ENCODE measurements at regions of chr4 and their contacts with region 1.

Region 1: DNA sequence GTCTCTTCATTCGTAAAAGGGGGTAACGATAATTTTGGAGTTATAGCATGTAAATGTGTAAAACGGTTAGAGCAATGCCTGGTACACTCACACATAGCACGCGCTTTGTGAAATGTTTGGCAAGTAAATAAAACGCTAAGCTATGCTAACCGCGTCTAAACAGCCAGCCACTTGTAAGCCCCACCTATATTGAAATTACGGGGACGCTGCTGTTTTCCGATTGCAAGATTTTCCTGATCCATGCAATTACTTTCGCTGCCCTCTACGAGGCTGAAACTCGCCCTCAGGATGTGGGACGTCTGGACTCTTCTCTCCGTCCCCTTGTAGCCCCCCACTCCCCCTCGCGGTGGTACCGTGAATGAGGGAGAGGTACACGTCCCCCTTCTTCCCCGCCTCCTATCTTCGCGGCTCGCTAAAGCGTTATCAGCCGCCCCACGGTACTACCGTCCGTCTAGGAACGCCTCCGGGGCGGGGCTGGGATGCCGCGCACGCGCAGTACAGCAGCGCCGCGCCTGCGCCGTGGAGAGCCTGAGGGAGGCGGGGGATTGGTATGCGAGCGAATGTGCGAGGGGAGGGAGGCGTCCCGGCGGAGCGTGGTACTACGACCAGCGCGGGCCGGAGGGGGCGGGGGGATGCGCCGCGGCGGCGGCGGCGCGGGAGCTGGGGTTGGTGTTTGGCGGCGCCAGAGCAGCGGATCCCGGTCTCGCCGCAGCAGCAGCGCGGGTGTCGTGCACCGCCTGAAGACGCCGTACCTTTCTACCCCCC is at the start of gene STIM2:
- DNase-seq: peak; percentile 96 to 98 (median 96)
- H3K4me3 ChIP-seq: peak within 1 kb of the TSS; percentile 12 to 98 (median 72)
- H3K27ac ChIP-seq: peak within 1 kb of the TSS; percentile 40 to 99 (median 92)
- H3K4me1 ChIP-seq: peaks cover 18 to 50% of the 10 kb centered on the region in 2 donors
- H3K27me3 ChIP-seq: no peaks in the 10 kb centered on the region
- CTCF ChIP-seq: peak; percentile 8 to 58 (median 43)
- POLR2A ChIP-seq: peak; percentile 59 to 92
- total RNA-seq, gene STIM2: 7.5 to 30.4 (median 17.8) TPM

Region 2: GRCh38 chr4:25925486-25926201 is 934.7 kb before region 1 on chr4:
- intact Hi-C with region 1: no loop called
- DNase-seq: peak in 2 of 7 donors; percentile 40 to 60
- H3K4me3 ChIP-seq: no peak overlapping the region
- H3K27ac ChIP-seq: no peak overlapping the region
- H3K4me1 ChIP-seq: peaks cover 0 to 22% of the 10 kb centered on the region in 2 donors
- H3K27me3 ChIP-seq: no peaks in the 10 kb centered on the region
- CTCF ChIP-seq: peak in 5 of 6 experiments; percentile 15 to 43 (median 33)
- POLR2A ChIP-seq: no peak

Region 3: GRCh38 chr4:26985873-26986272 is 125.5 kb after region 1 on chr4:
- intact Hi-C with region 1: loop called in 1 of 2 experiments (anchors 10 kb)
- DNase-seq: no peak
- H3K4me3 ChIP-seq: no peak overlapping the region
- H3K27ac ChIP-seq: no peak overlapping the region
- H3K4me1 ChIP-seq: no peaks in the 10 kb centered on the region
- H3K27me3 ChIP-seq: no peaks in the 10 kb centered on the region
- CTCF ChIP-seq: no peak
- POLR2A ChIP-seq: no peak

Measured in adrenal gland (tissue), 19 donors.